Calu3 (cell line): ENCODE measurements at regions of chr2 and their contacts with region 1.

Region 1: DNA sequence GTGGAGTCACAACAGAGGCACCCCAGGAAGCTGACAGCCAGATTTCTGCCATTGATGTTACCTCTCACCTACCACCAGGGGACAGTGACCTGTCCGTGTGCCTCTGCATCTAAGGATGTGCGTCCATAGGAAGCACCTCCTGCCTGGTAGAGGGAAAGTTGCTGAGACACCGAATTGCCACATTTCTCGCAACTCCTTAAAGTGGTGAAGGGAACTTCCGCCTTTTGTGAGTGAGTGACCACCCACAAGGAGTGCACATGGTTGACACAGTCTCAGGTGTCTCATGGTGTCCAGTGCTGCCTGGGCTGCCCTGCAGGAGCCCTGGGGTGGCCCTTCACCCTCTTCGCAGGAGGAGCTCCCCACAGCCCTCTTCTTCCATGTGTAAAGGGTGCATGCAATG is 201.8 kb downstream of the GBX2 start:
- DNase-seq: no peak
- H3K4me3 Mint-ChIP-seq: no peak overlapping the region
- H3K27ac Mint-ChIP-seq: no peak overlapping the region
- H3K4me1 Mint-ChIP-seq: no peaks in the 10 kb centered on the region
- H3K27me3 Mint-ChIP-seq: no peaks in the 10 kb centered on the region
- CTCF ChIP-seq: no peak

Region 2: DNA sequence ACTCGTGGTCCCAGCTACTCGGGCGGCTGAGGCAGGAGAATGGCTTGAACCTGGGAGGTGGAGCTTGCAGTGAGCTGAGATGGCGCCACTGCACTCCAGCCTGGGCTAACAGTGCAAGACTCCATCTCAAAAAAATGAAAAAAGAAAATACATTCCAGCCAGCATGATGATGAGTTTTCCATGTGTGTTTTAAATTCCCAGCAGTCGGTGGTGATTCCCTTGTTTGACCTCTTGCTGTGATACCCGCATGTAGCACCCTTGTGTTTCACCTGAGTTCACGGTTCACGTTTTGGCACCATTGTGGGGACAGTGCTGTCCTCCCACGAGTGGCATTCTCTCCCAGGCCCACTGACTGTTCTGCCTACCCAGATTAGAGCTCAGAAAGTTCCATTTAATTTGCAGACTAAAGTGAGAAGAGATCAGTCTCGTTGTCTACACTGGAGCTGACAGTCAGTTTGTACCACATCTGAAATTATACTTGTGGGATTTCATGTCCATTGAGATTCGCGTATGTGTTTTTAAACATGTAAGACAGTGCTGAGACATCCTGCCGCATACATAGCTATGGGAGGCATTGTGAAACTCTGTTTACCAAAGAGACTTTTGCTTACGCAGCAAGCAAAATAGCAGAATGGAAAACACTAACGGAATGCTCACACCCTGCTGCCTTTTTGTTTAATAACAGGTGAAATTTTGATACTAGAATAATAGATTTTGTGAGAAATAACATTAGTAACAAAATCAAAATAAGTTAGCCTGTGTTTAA is 44.7 kb after region 1 on chr2:
- CTCF ChIA-PET with region 1: interaction called, 12 read pairs
- intact Hi-C with region 1: no loop called
- DNase-seq: no peak
- H3K4me3 Mint-ChIP-seq: no peak overlapping the region
- H3K27ac Mint-ChIP-seq: no peak overlapping the region
- H3K4me1 Mint-ChIP-seq: peaks cover 10% of the 10 kb centered on the region
- H3K27me3 Mint-ChIP-seq: no peaks in the 10 kb centered on the region
- CTCF ChIP-seq: no peak

Region 3: GRCh38 chr2:236168110-236169067 is 202.0 kb after region 1 on chr2 and contains the start of gene GBX2:
- CTCF ChIA-PET with region 1: no interaction called
- intact Hi-C with region 1: no loop called
- DNase-seq: peak; percentile 80
- H3K4me3 Mint-ChIP-seq: peak within 1 kb of the TSS; percentile 93
- H3K27ac Mint-ChIP-seq: no peak within 1 kb of the TSS
- H3K4me1 Mint-ChIP-seq: no peaks in the 10 kb centered on the region
- H3K27me3 Mint-ChIP-seq: no peaks in the 10 kb centered on the region
- CTCF ChIP-seq: no peak
- total RNA-seq, gene GBX2: 2.2 and 2.4 TPM in 2 replicates